Activated CD8-positive, alpha-beta T cell treated with anti-CD3 and anti-CD28 coated beads for 36 hours (primary cell): ENCODE measurements at regions of chr5 and their contacts with region 1.

Region 1: DNA sequence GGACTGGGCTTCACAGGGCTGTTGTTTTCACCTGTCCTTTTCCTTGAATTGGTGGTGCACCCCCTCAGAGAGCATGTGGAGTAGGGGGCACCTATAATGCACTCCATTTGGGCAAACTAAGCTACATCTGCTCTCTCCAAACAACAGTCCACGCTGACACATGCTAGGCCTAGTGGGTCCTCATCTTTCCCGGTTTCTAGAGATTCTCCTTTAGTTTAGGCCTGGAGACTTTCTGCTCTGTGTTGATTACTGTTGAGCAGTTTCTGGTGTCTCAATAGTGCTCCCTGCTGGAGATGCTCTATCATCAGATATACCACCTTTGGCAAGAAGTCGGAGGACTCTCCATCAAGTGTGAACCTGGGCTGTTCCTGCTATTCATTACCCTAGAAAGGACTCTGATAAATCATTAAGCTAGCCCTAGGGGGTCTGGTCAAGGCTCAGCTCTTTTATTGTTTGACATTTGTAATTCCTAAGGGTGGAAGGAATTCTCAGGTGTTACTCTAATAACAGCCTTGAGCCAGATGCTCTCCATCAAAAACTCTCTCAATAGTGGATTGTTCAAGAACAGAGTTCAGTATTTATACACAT is 64.0 kb upstream of the FYB1 start:
- DNase-seq: peak; percentile 70
- ATAC-seq: peak; percentile 99
- H3K4me3 Mint-ChIP-seq: no peak overlapping the region
- H3K27ac Mint-ChIP-seq: peak overlapping the region; percentile 73
- H3K4me1 Mint-ChIP-seq: peaks cover 29% of the 10 kb centered on the region
- H3K27me3 Mint-ChIP-seq: peaks cover 5% of the 10 kb centered on the region
- CTCF ChIP-seq: peak; percentile 78

Region 2: GRCh38 chr5:39058178-39058921 is 225.0 kb before region 1 on chr5:
- CTCF ChIA-PET with region 1: no interaction called
- POLR2A ChIA-PET with region 1: no interaction called
- intact Hi-C with region 1: no loop called
- DNase-seq: no peak
- ATAC-seq: peak; percentile 78
- H3K4me3 Mint-ChIP-seq: peak overlapping the region; percentile 55
- H3K27ac Mint-ChIP-seq: peak overlapping the region; percentile 3
- H3K4me1 Mint-ChIP-seq: peaks cover 71% of the 10 kb centered on the region
- H3K27me3 Mint-ChIP-seq: no peaks in the 10 kb centered on the region
- CTCF ChIP-seq: no peak

Region 3: GRCh38 chr5:39140558-39141168 is 142.7 kb before region 1 on chr5:
- CTCF ChIA-PET with region 1: interaction called, 18 read pairs
- POLR2A ChIA-PET with region 1: no interaction called
- intact Hi-C with region 1: no loop called
- DNase-seq: no peak
- ATAC-seq: no peak
- H3K4me3 Mint-ChIP-seq: no peak overlapping the region
- H3K27ac Mint-ChIP-seq: no peak overlapping the region
- H3K4me1 Mint-ChIP-seq: peaks cover 42% of the 10 kb centered on the region
- H3K27me3 Mint-ChIP-seq: no peaks in the 10 kb centered on the region
- CTCF ChIP-seq: no peak

Region 4: GRCh38 chr5:39177631-39177964 is 105.7 kb before region 1 on chr5:
- CTCF ChIA-PET with region 1: interaction called, 17 read pairs
- POLR2A ChIA-PET with region 1: no interaction called
- intact Hi-C with region 1: no loop called
- DNase-seq: no peak
- ATAC-seq: peak; percentile 16
- H3K4me3 Mint-ChIP-seq: peak overlapping the region; percentile 55
- H3K27ac Mint-ChIP-seq: peak overlapping the region; percentile 89
- H3K4me1 Mint-ChIP-seq: peaks cover 95% of the 10 kb centered on the region
- H3K27me3 Mint-ChIP-seq: no peaks in the 10 kb centered on the region
- CTCF ChIP-seq: no peak

Region 5: DNA sequence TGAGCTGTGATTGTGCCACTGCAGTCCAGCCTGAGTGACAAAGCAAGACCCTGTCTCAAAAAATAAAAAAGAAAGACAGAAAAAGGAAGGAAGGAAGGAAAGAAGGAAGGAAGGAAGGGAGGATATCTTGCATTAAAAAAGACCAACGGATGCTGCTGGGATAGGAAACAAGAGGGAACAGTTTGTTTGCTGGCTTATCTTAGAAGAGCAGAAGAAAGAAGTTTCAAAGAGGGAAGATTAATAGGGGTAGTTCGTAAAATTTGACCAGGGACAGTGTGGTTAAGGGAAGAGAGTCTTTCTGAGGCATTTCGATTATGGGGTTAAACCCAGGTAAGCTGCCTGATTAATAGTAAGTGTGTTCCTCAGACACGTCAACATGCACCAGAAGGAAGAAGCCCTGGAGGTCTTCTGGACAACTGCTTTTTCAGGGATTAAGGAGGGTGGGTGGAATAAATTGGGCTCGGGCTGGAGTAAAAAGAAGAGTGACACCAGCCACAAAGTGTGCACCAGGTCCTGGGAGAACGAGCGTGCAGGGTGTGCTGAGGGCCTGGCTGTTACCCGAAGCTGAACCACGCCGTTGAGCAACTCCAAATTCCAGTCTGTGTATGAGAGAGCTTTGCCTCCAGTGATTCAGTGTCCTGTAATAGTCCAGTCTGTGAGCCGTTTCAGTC is 88.7 kb before region 1 on chr5:
- CTCF ChIA-PET with region 1: interaction called, 50 read pairs
- POLR2A ChIA-PET with region 1: interaction called, 11 read pairs
- intact Hi-C with region 1: no loop called
- DNase-seq: no peak
- ATAC-seq: peak; percentile 19
- H3K4me3 Mint-ChIP-seq: peak overlapping the region; percentile 66
- H3K27ac Mint-ChIP-seq: peak overlapping the region; percentile 89
- H3K4me1 Mint-ChIP-seq: peaks cover 69% of the 10 kb centered on the region
- H3K27me3 Mint-ChIP-seq: no peaks in the 10 kb centered on the region
- CTCF ChIP-seq: no peak

Region 6: GRCh38 chr5:39209924-39210323 is 73.4 kb before region 1 on chr5:
- CTCF ChIA-PET with region 1: interaction called, 11 read pairs
- POLR2A ChIA-PET with region 1: interaction called, 3 read pairs
- intact Hi-C with region 1: no loop called
- DNase-seq: peak; percentile 91
- ATAC-seq: peak; percentile 74
- H3K4me3 Mint-ChIP-seq: peak overlapping the region; percentile 71
- H3K27ac Mint-ChIP-seq: peak overlapping the region; percentile 94
- H3K4me1 Mint-ChIP-seq: peaks cover 87% of the 10 kb centered on the region
- H3K27me3 Mint-ChIP-seq: no peaks in the 10 kb centered on the region
- CTCF ChIP-seq: no peak

Region 7: GRCh38 chr5:39256477-39257235 is 26.7 kb before region 1 on chr5:
- CTCF ChIA-PET with region 1: interaction called, 15 read pairs
- POLR2A ChIA-PET with region 1: no interaction called
- intact Hi-C with region 1: no loop called
- DNase-seq: peak; percentile 17
- ATAC-seq: peak; percentile 92
- H3K4me3 Mint-ChIP-seq: peak overlapping the region; percentile 38
- H3K27ac Mint-ChIP-seq: peak overlapping the region; percentile 78
- H3K4me1 Mint-ChIP-seq: peaks cover 21% of the 10 kb centered on the region
- H3K27me3 Mint-ChIP-seq: no peaks in the 10 kb centered on the region
- CTCF ChIP-seq: no peak

Region 8: GRCh38 chr5:39314591-39314990 is 31.3 kb after region 1 on chr5:
- CTCF ChIA-PET with region 1: no interaction called
- POLR2A ChIA-PET with region 1: no interaction called
- intact Hi-C with region 1: no loop called
- DNase-seq: no peak
- ATAC-seq: no peak
- H3K4me3 Mint-ChIP-seq: no peak overlapping the region
- H3K27ac Mint-ChIP-seq: no peak overlapping the region
- H3K4me1 Mint-ChIP-seq: no peaks in the 10 kb centered on the region
- H3K27me3 Mint-ChIP-seq: peaks cover 2% of the 10 kb centered on the region
- CTCF ChIP-seq: no peak